ENCODE measurements at regions of chr13 and their contacts with region 1.

Region 1: DNA sequence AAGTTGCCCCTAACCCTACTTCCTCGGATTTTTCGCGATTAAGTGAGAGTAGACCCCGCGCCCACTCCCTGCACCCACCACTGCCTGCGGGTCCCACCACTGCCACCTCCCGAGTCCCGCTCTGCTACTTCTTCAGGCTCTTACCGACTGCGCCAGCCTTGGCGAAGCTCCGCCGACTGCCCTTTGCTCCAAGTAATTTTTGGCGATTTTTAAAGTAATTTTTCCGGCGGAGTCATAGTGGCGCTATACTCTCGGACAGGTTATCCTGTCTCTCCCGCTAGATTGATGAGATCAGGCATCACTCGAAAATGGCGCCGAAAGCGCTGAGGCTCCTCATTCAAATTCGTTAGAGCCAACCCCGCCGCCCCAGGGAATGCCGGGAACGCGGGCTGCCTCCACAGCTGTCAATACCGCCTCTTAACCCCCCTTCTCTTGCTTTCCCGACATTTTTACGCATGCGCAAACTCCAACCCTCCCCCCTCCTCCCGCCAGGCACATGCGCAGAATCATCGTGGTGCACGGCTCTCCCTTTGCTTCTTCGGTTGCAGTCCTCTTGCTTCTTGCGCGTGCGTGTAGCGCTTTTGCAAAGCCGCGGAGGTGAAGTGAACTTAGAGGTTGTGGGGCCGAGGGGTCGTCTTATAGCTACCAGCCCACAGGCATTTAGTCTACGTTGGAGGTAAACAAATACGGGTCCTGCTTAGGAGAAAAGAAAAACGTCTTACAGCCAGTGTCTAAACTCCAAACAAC is 66.6 kb downstream of the KCNRG start:
- DNase-seq: peak; percentile 100
- H3K4me3 ChIP-seq: peak overlapping the region; percentile 86 to 99 (median 95)
- H3K27ac ChIP-seq: peak overlapping the region; percentile 88
- H3K4me1 ChIP-seq: peaks cover 27% of the 10 kb centered on the region
- H3K27me3 ChIP-seq: no peaks in the 10 kb centered on the region
- CTCF ChIP-seq: peak in 1 of 2 donors; percentile 9
- POLR2A ChIP-seq: peak; percentile 30

Region 2: GRCh38 chr13:49775246-49775645 is 306.6 kb before region 1 on chr13:
- CTCF ChIA-PET with region 1: no interaction called
- POLR2A ChIA-PET with region 1: no interaction called
- dilution Hi-C with region 1: no loop called
- intact Hi-C with region 1: no loop called
- DNase-seq: no peak
- H3K4me3 ChIP-seq: no peak overlapping the region
- H3K27ac ChIP-seq: no peak overlapping the region
- H3K4me1 ChIP-seq: no peaks in the 10 kb centered on the region
- H3K27me3 ChIP-seq: no peaks in the 10 kb centered on the region
- CTCF ChIP-seq: no peak
- POLR2A ChIP-seq: no peak

Region 3: GRCh38 chr13:49976314-49977258 is 105.3 kb before region 1 on chr13:
- CTCF ChIA-PET with region 1: interaction called, 52 read pairs
- POLR2A ChIA-PET with region 1: no interaction called
- dilution Hi-C with region 1: no loop called
- intact Hi-C with region 1: loop called (anchors 2 kb)
- DNase-seq: peak; percentile 77
- H3K4me3 ChIP-seq: no peak overlapping the region
- H3K27ac ChIP-seq: no peak overlapping the region
- H3K4me1 ChIP-seq: no peaks in the 10 kb centered on the region
- H3K27me3 ChIP-seq: no peaks in the 10 kb centered on the region
- CTCF ChIP-seq: peak; percentile 88 to 90
- POLR2A ChIP-seq: no peak

Region 4: DNA sequence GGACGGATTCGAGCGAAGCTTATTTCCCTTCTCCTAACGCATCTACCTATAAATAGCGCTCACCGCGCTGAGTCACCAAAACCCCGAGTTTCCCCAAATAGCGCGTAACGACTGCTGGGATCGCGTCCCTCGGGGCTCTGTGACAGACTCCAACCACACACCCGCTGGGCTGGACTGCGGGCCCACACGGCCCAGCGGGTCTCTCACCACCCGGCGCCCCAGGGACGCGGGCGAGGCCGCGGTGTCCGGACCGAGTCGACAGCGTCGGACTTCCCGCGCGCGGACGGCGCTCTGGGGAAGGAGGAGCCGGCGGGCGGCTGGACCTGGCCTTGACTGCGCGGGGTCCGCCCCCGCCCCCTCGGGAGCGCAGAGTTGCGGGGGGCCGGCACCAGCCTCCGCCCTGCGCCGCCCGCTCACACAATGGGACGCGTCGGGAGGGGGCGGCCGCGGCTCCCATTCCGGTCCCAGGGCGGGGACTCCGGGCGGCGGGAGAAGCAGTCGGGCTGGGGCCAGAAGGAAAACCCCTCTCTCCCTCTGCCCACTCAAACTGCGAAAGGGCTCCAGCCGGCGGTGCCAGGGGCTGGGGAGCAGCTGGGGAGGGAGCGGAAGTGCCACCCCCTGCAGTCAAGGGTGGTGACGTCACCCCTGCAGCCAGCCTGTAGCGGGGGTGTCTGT is 42.1 kb after region 1 on chr13:
- CTCF ChIA-PET with region 1: interaction called, 58 read pairs
- POLR2A ChIA-PET with region 1: interaction called, 4 read pairs
- dilution Hi-C with region 1: no loop called
- intact Hi-C with region 1: loop called (anchors 1 kb)
- DNase-seq: peak; percentile 95
- H3K4me3 ChIP-seq: peak overlapping the region; percentile 68 to 91 (median 75)
- H3K27ac ChIP-seq: peak overlapping the region; percentile 93
- H3K4me1 ChIP-seq: peaks cover 8% of the 10 kb centered on the region
- H3K27me3 ChIP-seq: peaks cover 4 to 7% of the 10 kb centered on the region in 2 experiments
- CTCF ChIP-seq: no peak
- POLR2A ChIP-seq: peak; percentile 77

Region 5: DNA sequence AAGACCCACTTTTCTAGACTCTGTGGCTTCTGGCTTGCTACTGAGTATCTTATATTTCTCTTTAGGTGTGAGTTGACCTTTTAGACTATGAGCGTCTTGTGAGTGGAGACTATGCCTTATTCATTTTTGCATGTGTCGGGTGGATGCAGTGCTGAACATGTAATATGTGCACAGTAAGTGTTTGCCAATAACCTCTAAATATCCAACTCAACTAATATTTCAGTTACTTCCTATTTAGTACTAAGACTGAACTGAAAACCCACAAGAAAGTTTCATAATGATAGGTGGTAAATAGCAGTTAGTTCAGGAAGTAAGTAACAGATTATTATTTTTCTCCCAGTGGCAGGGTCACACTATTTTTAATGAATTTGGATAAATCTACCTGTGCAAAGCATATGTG is 202.7 kb after region 1 on chr13:
- CTCF ChIA-PET with region 1: no interaction called
- POLR2A ChIA-PET with region 1: no interaction called
- dilution Hi-C with region 1: no loop called
- intact Hi-C with region 1: no loop called
- DNase-seq: no peak
- H3K4me3 ChIP-seq: no peak overlapping the region
- H3K27ac ChIP-seq: no peak overlapping the region
- H3K4me1 ChIP-seq: no peaks in the 10 kb centered on the region
- H3K27me3 ChIP-seq: no peaks in the 10 kb centered on the region
- CTCF ChIP-seq: no peak
- POLR2A ChIP-seq: no peak

Region 6: DNA sequence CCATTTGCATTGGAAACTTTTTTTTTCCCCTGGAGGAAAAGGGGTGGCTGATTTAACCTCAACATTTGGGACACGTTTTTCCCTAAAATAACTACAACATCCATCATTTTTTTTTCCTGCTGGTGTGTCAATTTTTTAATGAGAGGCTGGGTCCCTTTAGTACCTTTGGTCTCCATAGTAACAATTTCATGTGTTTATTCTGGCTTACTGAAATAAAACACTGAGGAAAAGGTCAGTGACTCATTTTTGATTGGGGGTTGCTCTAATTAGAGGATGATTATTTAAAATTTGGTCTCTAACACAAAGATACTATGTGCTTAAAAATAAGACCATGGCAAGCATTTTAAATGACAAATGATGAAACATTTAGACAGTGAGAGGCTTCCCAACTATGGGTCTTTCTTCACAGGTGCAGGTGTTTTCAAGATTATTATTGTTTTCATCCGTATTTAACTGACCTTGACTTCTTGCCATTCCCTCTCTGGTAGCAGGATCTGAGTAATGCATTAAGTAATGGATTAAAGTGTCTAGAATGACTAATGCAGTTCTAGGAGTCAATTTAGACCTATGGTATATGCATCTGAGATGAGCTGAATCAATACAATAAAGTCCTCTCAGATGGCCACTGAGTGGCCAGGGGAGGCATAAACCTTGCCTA is 339.8 kb after region 1 on chr13:
- CTCF ChIA-PET with region 1: no interaction called
- POLR2A ChIA-PET with region 1: no interaction called
- dilution Hi-C with region 1: no loop called
- intact Hi-C with region 1: loop called (anchors 2 kb)
- DNase-seq: peak; percentile 91
- H3K4me3 ChIP-seq: peak overlapping the region in 1 of 3 experiments; percentile 9
- H3K27ac ChIP-seq: peak overlapping the region; percentile 57
- H3K4me1 ChIP-seq: peaks cover 19% of the 10 kb centered on the region
- H3K27me3 ChIP-seq: no peaks in the 10 kb centered on the region
- CTCF ChIP-seq: no peak
- POLR2A ChIP-seq: no peak

Region 7: GRCh38 chr13:50529154-50529882 is 447.5 kb after region 1 on chr13:
- CTCF ChIA-PET with region 1: interaction called, 19 read pairs
- POLR2A ChIA-PET with region 1: no interaction called
- dilution Hi-C with region 1: no loop called
- intact Hi-C with region 1: loop called (anchors 1 kb)
- DNase-seq: peak; percentile 81
- H3K4me3 ChIP-seq: no peak overlapping the region
- H3K27ac ChIP-seq: peak overlapping the region; percentile 39
- H3K4me1 ChIP-seq: peaks cover 8% of the 10 kb centered on the region
- H3K27me3 ChIP-seq: no peaks in the 10 kb centered on the region
- CTCF ChIP-seq: no peak
- POLR2A ChIP-seq: no peak

Region 8: DNA sequence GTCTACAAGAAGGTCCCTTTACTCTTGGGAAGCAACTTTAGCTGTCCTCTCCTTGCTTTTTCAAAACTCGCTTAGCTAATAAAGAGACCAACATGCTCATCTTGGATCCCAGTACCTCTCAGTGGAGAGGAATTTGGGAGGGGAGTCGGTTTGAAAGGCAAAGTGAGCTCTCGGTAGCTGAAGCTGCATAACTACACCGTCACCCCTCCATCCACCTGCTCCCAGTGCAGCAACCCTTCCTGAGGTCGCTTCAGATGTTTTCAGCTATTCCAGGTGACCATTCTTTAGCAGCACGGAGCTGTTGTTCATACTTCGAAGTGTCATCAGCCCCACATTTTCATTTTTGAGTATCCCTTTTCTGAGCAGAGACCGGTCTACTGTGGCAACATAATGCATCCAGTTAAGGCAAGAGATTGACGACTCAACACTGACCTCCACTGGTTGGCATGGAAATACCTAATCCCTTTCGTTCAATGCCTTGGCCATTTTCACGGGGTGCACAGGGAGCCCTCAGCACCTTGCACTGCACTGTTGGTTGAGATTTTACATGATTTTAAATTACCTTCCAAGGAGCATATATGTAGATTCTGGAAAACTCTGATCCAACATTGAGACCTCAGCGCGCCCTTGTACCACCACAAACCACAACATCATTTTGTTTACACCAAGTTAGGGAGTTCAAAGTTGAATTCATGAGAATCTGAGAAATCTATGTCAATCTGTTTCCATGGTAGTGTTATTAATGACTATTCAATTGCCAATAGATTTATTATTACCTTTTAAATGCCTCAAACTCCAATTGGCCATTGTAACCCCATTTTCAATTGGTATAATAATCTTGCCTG is 719.5 kb after region 1 on chr13:
- CTCF ChIA-PET with region 1: interaction called, 32 read pairs
- POLR2A ChIA-PET with region 1: no interaction called
- dilution Hi-C with region 1: no loop called
- intact Hi-C with region 1: loop called (anchors 1 kb)
- DNase-seq: peak; percentile 75
- H3K4me3 ChIP-seq: no peak overlapping the region
- H3K27ac ChIP-seq: no peak overlapping the region
- H3K4me1 ChIP-seq: peaks cover 4% of the 10 kb centered on the region
- H3K27me3 ChIP-seq: no peaks in the 10 kb centered on the region
- CTCF ChIP-seq: peak; percentile 71 to 72
- POLR2A ChIP-seq: no peak

Measured in endothelial cell of umbilical vein (primary cell).